Motor neuron (in vitro differentiated cells): ENCODE measurements at regions of chr20 and their contacts with region 1.

Region 1: GRCh38 chr20:34069341-34070078 is 42.5 kb downstream of the EIF2S2 start:
- ATAC-seq: peak; percentile 68 to 93 (median 88)
- H3K4me3 ChIP-seq: no peak overlapping the region
- H3K27ac ChIP-seq: no peak overlapping the region
- H3K4me1 ChIP-seq: peaks cover 0 to 3% of the 10 kb centered on the region in 2 donors

Region 2: GRCh38 chr20:33862709-33863403 is 206.7 kb before region 1 on chr20:
- in situ Hi-C with region 1: loop called in 3 of 9 experiments (anchors 25 kb)
- ATAC-seq: peak; percentile 87 to 95 (median 91)
- H3K4me3 ChIP-seq: no peak overlapping the region
- H3K27ac ChIP-seq: no peak overlapping the region
- H3K4me1 ChIP-seq: peaks cover 19 to 29% of the 10 kb centered on the region in 2 donors

Region 3: DNA sequence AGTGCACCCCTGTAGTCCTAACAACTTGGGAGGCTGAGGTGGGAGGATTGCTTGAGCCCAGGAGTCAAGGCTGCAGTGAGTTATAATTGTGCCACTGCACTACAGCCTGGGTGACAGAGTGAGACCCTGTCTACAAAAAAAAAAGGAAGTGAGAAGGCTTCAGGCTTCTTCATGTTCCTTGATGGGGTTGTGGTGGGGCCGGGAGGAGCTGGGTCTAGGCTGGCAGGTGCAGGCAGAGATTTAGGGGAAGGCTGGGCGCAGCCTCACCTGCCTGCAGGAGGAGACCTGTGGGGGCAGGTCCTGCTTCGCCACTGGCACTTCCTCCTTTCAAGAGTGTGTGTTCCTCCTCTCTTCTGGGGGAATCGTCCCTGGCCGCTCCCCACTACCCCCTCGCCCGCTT is 194.5 kb before region 1 on chr20:
- in situ Hi-C with region 1: loop called in 4 of 9 experiments (anchors 10 to 25 kb)
- ATAC-seq: no peak
- H3K4me3 ChIP-seq: no peak overlapping the region
- H3K27ac ChIP-seq: no peak overlapping the region
- H3K4me1 ChIP-seq: peaks cover 0 to 8% of the 10 kb centered on the region in 2 donors

Region 4: DNA sequence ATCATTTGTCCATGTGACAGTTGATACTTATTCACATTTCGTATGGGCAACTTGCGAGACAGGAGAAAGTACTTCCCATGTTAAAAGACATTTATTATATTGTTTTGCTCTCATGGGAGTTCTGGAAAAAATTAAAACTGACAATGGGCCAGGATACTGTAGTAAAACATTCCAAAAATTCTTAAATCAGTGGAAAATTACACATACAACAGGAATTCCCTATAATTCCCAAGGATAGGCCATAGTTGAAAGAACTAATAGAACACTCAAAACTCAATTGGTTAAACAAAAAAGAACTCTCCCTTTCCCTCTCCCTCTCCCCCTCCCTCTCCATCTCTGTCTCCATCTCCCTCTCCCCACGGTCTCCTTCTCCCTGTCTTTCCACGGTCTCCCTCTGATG is 62.0 kb after region 1 on chr20:
- in situ Hi-C with region 1: no loop called
- ATAC-seq: no peak
- H3K4me3 ChIP-seq: no peak overlapping the region
- H3K27ac ChIP-seq: no peak overlapping the region
- H3K4me1 ChIP-seq: peaks cover 0 to 2% of the 10 kb centered on the region in 2 donors